ENCODE measurements at regions of chr6 and their contacts with region 1.

Region 1: DNA sequence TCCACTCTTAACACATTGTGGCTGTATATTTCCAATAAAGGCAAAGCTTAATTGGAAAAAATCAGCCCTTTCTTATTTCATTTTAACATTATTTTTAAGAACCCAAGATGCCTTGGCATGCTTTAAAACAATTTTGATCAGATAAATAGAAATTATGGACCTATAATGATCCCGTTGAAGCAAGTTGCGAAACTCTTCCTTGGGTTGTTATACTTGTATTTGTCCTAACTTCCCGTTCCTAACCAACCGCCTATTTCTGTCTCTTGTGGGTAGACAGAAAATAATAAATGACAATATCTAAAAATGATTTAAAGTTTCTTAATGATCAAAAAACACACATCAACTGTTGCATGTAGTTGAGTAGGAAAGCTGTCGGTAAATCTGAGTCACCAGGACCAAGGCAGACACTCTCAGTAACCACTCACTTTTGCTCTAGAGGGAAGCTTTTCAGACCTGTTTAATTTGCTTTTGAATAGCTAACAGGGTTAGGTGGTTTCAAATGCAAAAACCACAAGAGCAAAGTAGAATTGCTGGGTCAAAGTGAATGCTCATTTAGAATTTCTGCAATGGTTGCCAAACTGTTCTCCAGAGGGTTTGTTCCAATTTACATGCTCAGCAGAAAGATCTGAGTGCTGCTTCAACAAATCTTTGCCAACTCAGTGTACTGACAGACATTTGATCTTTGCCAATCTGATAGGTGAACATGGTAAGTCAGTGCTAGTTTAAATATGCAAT is 34.2 kb upstream of the KCNK5 start:
- DNase-seq: peak; percentile 9
- H3K4me3 Mint-ChIP-seq: no peak overlapping the region
- H3K27ac Mint-ChIP-seq: no peak overlapping the region
- H3K4me1 Mint-ChIP-seq: peaks cover 15% of the 10 kb centered on the region
- H3K27me3 Mint-ChIP-seq: peaks cover 12% of the 10 kb centered on the region

Region 2: GRCh38 chr6:39236742-39237141 is 26.7 kb before region 1 on chr6:
- intact Hi-C with region 1: loop called (anchors 2 kb)
- DNase-seq: no peak
- H3K4me3 Mint-ChIP-seq: no peak overlapping the region
- H3K27ac Mint-ChIP-seq: no peak overlapping the region
- H3K4me1 Mint-ChIP-seq: no peaks in the 10 kb centered on the region
- H3K27me3 Mint-ChIP-seq: peaks cover 10% of the 10 kb centered on the region

Region 3: DNA sequence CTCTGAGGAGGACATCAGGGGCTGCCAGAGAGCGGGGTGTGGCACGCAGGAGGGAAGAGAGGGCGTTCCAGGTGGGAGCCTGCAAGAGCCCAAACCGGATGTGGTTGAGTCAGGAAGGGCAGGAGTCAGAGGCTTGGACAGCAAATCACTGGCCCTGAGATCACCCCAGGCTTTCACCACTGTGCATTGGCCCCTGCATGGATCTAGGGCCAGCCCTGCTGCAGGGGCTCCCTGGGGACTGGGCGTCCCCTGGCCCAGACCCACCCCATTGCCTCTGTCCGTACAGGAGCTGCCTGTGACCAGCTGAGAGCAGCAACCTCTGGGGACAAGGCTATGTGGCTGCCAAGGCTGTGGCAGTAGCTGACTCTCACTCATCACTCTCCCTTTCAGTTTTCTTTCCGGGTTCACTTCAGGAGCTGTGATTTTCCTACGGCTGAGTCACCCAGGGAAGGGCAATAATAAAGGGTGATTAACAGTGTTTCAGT is 16.8 kb after region 1 on chr6:
- intact Hi-C with region 1: no loop called
- DNase-seq: no peak
- H3K4me3 Mint-ChIP-seq: no peak overlapping the region
- H3K27ac Mint-ChIP-seq: no peak overlapping the region
- H3K4me1 Mint-ChIP-seq: no peaks in the 10 kb centered on the region
- H3K27me3 Mint-ChIP-seq: peaks cover 17% of the 10 kb centered on the region

Region 4: GRCh38 chr6:39426088-39426456 is 162.6 kb after region 1 on chr6:
- intact Hi-C with region 1: no loop called
- DNase-seq: no peak
- H3K4me3 Mint-ChIP-seq: no peak overlapping the region
- H3K27ac Mint-ChIP-seq: no peak overlapping the region
- H3K4me1 Mint-ChIP-seq: peaks cover 3% of the 10 kb centered on the region
- H3K27me3 Mint-ChIP-seq: no peaks in the 10 kb centered on the region